ENCODE measurements at regions of chr10 and their contacts with region 1.

Region 1: GRCh38 chr10:124827474-124827873 is 25.9 kb downstream of the ABRAXAS2 start:
- DNase-seq: no peak
- H3K4me3 ChIP-seq: no peak overlapping the region
- H3K27ac ChIP-seq: no peak overlapping the region
- H3K4me1 ChIP-seq: no peaks in the 10 kb centered on the region
- H3K27me3 ChIP-seq: no peaks in the 10 kb centered on the region
- CTCF ChIP-seq: peak; percentile 22 to 33 (median 24)
- EP300 ChIP-seq: no peak
- POLR2A ChIP-seq: no peak

Region 2: GRCh38 chr10:124522933-124523871 is 304.3 kb before region 1 on chr10:
- intact Hi-C with region 1: loop called in 1 of 4 experiments (anchors 10 kb)
- DNase-seq: peak in 4 of 5 donors; percentile 35 to 69 (median 54)
- H3K4me3 ChIP-seq: peak overlapping the region; percentile 3
- H3K27ac ChIP-seq: peak overlapping the region in 1 of 2 donors; percentile 41
- H3K4me1 ChIP-seq: peaks cover 3% of the 10 kb centered on the region
- H3K27me3 ChIP-seq: no peaks in the 10 kb centered on the region
- CTCF ChIP-seq: no peak
- EP300 ChIP-seq: no peak
- POLR2A ChIP-seq: no peak

Region 3: GRCh38 chr10:124530215-124530665 is 297.2 kb before region 1 on chr10:
- intact Hi-C with region 1: loop called (anchors 2 to 10 kb)
- DNase-seq: peak; percentile 84 to 92 (median 89)
- H3K4me3 ChIP-seq: no peak overlapping the region
- H3K27ac ChIP-seq: no peak overlapping the region
- H3K4me1 ChIP-seq: peaks cover 10% of the 10 kb centered on the region
- H3K27me3 ChIP-seq: no peaks in the 10 kb centered on the region
- CTCF ChIP-seq: peak; percentile 78 to 86 (median 86)
- EP300 ChIP-seq: no peak
- POLR2A ChIP-seq: no peak

Region 4: DNA sequence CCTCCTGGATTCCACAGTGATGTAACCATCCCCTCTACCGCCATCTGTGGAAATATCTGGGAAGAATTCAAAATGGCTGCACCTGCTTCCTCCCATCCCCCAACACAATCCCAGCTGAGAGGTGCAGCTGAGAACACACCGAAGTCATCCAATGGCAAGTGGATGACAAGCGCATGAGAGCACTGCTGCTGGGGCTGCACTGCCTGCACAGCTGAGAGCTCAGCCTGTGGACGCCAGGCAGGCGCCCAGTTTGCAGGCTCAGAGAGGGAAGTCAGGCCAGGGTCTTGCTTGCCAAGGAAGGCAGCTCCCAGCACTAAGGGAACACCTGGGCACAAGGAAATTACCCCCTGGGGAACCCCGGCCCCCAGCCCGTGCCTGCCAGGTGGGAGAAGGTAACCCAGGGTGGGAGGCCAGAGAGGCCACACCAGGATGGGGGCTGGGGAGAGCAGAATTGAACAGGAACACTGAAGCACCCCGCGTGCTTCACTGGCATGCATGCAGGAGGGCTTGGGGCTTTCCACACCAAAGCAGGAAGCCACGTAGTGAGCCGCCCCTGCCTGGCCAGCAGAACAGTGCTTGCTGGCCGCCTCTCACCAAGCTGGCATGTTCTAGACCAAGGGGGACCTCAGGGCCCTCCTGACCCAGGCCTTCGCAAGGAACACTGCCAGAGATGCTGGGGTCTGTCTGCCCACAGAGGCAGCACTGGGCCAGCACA is 129.5 kb before region 1 on chr10:
- intact Hi-C with region 1: no loop called
- DNase-seq: peak in 2 of 5 donors; percentile 29 to 43
- H3K4me3 ChIP-seq: no peak overlapping the region
- H3K27ac ChIP-seq: no peak overlapping the region
- H3K4me1 ChIP-seq: peaks cover 48% of the 10 kb centered on the region
- H3K27me3 ChIP-seq: no peaks in the 10 kb centered on the region
- CTCF ChIP-seq: no peak
- EP300 ChIP-seq: no peak
- POLR2A ChIP-seq: no peak

Region 5: DNA sequence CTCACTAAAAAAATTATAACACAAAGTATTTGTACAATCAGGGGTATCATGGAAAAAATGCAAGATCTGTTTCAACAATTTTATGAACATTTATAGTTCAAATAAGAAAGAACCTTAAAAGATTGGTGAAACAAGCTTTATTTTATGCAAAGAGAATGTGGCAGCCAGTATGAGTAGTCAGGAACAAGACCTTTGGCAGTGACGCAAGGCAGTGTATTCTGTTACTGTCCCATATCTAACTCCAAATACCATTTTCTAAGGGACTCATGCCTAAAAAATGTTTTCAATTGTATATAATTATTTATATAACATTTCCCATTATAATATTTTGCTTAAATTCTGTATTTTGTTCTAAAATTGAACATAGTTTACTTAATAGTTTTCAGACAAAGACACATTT is 64.2 kb before region 1 on chr10:
- intact Hi-C with region 1: loop called in 1 of 4 experiments (anchors 10 kb)
- DNase-seq: no peak
- H3K4me3 ChIP-seq: no peak overlapping the region
- H3K27ac ChIP-seq: no peak overlapping the region
- H3K4me1 ChIP-seq: no peaks in the 10 kb centered on the region
- H3K27me3 ChIP-seq: no peaks in the 10 kb centered on the region
- CTCF ChIP-seq: no peak
- EP300 ChIP-seq: no peak
- POLR2A ChIP-seq: no peak

Region 6: DNA sequence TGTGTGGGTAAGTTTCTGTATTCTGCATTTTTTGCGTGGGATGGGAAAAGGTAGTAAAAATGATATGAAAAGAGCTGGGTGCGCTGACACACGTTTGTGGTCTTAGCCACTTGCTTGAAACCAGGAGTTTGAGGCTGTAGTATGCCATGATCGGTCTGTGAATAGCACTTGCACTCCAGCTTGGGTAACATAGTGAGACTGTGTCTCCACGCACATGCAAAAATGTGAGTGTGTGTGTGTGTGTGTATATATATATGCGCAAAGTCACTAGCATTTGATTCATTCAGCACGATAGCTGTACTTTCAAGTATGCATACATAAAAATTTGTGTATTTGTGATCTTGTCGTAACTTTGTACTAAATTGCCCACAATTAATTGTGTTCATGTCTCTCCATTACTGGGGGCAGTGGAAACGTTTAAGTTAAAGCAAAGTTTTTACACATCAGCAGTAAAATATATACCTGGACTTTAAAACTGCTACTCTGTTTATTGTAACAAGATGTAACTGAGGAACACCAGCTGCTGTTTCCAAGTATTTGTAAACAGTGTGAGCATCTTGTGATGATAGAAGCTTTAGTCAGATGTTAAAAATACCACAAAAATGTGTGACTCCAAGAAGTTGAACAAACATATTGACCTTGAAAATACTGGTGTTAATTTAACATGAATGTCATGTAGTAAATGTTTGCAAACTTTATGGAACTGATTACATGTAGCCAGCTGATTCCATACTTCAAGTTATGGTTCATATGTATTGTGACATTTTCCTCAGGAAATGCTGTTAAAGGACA is 116.0 kb after region 1 on chr10:
- intact Hi-C with region 1: no loop called
- DNase-seq: no peak
- H3K4me3 ChIP-seq: peak overlapping the region; percentile 18
- H3K27ac ChIP-seq: peak overlapping the region; percentile 29 to 57
- H3K4me1 ChIP-seq: peaks cover 36% of the 10 kb centered on the region
- H3K27me3 ChIP-seq: no peaks in the 10 kb centered on the region
- CTCF ChIP-seq: no peak
- EP300 ChIP-seq: no peak
- POLR2A ChIP-seq: no peak

Measured in ovary (tissue), 10 donors.